Posterior cingulate gyrus (tissue), 11 donors: ENCODE measurements at regions of chr18 and their contacts with region 1.

Region 1: GRCh38 chr18:4283746-4284291 is 171.3 kb downstream of the DLGAP1 start:
- DNase-seq: no peak

Region 2: DNA sequence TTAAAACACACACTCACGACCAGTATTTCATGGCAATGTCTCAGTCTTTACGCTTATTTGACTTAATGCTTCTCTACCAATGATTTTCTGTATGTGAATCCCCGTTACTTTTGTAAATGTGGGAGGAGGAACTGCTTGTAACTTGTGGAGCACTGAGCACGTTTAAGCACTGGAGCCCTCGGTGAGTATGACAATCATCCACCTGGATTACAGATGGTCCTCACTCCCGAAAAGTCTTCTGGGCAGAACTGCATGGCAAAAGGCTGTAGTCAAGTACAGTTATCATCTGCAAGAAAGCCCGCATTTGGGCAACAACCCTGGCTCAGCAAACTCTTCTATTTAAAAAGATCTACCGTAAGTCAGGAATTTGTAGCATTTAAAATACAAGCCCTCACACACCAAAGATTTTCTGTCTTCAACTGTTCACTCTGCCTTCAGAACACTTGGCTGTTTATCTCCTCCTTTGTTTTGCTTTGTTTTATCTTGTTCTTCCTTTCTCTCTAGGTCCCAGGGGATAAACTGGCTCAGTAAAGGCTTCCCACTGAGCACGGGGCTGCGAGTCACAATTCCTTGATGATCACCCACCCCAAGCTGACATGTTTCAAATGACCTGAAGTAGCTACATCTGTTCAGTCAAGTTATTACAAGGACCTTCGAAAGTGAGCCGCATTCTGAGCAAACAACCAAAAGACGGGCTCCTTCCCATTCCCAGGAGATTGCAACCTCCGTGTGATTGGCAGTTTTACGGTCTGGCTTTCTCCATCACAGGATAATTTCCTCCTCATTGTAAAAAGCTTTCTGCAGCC is 69.1 kb after region 1 on chr18:
- intact Hi-C with region 1: loop called (anchors 10 kb)
- DNase-seq: peak in 1 of 10 donors; percentile 50

Region 3: GRCh38 chr18:4412286-4412685 is 128.5 kb after region 1 on chr18:
- intact Hi-C with region 1: no loop called
- DNase-seq: no peak